H1 (cell line): ENCODE measurements at regions of chr1 and their contacts with region 1.

Region 1: DNA sequence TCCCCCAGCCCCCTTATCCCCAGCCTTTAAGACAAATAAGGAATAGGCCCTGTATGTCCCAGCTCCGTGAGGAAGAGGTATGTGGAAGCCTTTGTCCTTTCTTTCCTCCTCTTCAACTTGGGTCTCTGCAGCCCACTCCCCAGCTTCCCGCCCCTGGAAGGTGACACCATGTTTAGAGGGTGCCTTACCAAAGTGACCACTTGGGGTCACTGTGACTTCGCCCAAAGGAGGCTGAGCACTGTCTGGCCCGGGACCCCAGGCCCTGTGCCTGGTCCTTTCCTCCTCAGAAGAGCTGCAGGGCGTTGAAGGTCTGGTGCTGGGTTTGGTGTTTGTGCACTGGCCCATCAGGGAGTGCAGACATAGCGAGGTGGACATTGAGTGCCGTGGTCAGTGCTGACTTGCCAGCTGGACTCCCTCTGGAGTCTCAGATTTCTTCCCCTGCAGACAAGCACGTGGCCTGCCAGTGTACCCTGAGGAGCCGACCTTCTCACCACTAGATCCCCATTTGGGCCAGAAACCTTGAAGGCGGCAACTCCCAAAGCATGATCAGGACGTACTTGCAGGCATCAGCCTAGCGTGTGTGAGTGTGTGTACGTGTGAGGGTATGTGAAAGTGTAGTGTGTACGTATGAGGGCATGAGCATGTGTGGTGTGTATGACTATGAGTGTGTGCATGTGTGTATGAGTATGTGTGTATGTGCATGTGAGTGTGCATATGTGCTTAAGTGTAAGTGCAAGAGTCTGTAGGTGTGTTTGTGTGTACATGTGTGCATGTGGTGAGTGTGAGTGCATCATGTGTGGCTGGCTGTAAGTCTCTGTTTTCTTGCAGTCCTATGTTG is 181.4 kb upstream of the KIAA0040 start:
- DNase-seq: peak; percentile 21 to 85
- H3K4me3 ChIP-seq: no peak overlapping the region
- H3K27ac ChIP-seq: no peak overlapping the region
- H3K4me1 ChIP-seq: peaks cover 0 to 4% (median 0%) of the 10 kb centered on the region in 4 experiments; a peak in 3 of 7 replicates
- H3K27me3 ChIP-seq: no peaks in the 10 kb centered on the region; a peak in 1 of 7 replicates
- CTCF ChIP-seq: peak; percentile 86 to 91 (median 90)
- EP300 ChIP-seq: no peak
- POLR2A ChIP-seq: no peak
- RAD21 ChIP-seq: peak; percentile 97 to 99

Region 2: GRCh38 chr1:174775614-174776013 is 598.4 kb before region 1 on chr1:
- CTCF ChIA-PET with region 1: no interaction called
- POLR2A ChIA-PET with region 1: no interaction called
- DNase-seq: no peak
- H3K4me3 ChIP-seq: no peak overlapping the region
- H3K27ac ChIP-seq: no peak overlapping the region
- H3K4me1 ChIP-seq: no peaks in the 10 kb centered on the region
- H3K27me3 ChIP-seq: no peaks in the 10 kb centered on the region
- CTCF ChIP-seq: no peak
- EP300 ChIP-seq: no peak
- POLR2A ChIP-seq: no peak
- RAD21 ChIP-seq: no peak

Region 3: DNA sequence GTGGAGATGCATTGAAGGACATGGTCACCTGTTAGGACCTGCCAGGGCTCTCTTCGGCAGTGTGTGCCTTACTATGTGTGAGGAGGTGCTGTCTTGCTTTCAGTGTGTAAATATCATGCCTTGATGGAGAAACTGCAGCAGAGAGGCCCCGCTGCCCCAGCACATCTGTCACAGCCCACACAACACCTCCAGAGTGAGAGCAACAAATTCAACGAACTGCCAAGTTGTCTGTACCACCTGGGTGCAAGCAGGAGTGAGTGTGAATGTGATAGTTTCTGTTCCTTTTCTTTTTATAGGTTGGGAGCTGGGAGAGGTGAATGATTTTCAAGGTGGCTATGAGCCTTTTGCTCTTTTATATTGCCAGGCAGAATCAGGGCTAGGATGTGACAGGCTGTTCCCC is 66.8 kb before region 1 on chr1:
- CTCF ChIA-PET with region 1: no interaction called
- POLR2A ChIA-PET with region 1: no interaction called
- DNase-seq: no peak
- H3K4me3 ChIP-seq: no peak overlapping the region
- H3K27ac ChIP-seq: no peak overlapping the region
- H3K4me1 ChIP-seq: peaks cover 0 to 3% (median 0%) of the 10 kb centered on the region in 4 experiments; a peak in 1 of 7 replicates
- H3K27me3 ChIP-seq: no peaks in the 10 kb centered on the region
- CTCF ChIP-seq: no peak
- EP300 ChIP-seq: no peak
- POLR2A ChIP-seq: no peak
- RAD21 ChIP-seq: no peak

Region 4: GRCh38 chr1:175363031-175363430 is 11.0 kb before region 1 on chr1:
- CTCF ChIA-PET with region 1: interaction called, 21 read pairs
- POLR2A ChIA-PET with region 1: no interaction called
- DNase-seq: no peak
- H3K4me3 ChIP-seq: no peak overlapping the region
- H3K27ac ChIP-seq: no peak overlapping the region
- H3K4me1 ChIP-seq: no peaks in the 10 kb centered on the region
- H3K27me3 ChIP-seq: peaks cover 0 to 3% (median under 1%) of the 10 kb centered on the region in 4 experiments; a peak in 2 of 7 replicates
- CTCF ChIP-seq: no peak
- EP300 ChIP-seq: no peak
- POLR2A ChIP-seq: no peak
- RAD21 ChIP-seq: no peak

Region 5: DNA sequence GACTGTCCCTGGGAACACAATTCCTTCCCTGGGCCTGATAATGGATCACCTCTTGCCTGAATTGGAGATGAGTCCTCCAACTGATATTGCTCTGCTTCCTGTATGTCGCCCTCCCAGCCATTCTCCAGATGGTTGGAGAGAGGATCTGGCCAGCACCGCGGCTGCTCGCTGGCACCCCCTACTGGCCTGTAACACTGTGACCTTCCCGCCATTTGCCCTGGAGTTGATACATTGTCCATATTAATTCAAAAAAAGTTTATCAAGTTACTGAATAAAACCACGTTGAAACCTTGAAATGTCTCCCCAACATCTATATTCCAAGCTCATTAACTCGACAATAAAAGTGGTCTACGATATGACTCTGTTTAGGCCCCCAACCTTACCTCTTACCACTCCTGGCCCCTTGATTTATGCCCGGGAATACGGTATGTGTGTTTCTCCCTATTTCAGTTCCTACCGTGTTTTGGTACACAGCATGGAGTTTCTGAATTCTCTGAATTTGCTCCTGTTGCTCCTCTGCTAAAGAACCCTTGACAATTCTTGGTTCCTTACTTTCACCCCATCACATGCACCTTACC is 60.4 kb after region 1 on chr1:
- CTCF ChIA-PET with region 1: interaction called, 39 read pairs
- POLR2A ChIA-PET with region 1: no interaction called
- DNase-seq: peak; percentile 17 to 80
- H3K4me3 ChIP-seq: no peak overlapping the region
- H3K27ac ChIP-seq: no peak overlapping the region
- H3K4me1 ChIP-seq: no peaks in the 10 kb centered on the region
- H3K27me3 ChIP-seq: no peaks in the 10 kb centered on the region
- CTCF ChIP-seq: peak; percentile 75 to 88 (median 85)
- EP300 ChIP-seq: no peak
- POLR2A ChIP-seq: no peak
- RAD21 ChIP-seq: peak; percentile 62 to 69

Region 6: DNA sequence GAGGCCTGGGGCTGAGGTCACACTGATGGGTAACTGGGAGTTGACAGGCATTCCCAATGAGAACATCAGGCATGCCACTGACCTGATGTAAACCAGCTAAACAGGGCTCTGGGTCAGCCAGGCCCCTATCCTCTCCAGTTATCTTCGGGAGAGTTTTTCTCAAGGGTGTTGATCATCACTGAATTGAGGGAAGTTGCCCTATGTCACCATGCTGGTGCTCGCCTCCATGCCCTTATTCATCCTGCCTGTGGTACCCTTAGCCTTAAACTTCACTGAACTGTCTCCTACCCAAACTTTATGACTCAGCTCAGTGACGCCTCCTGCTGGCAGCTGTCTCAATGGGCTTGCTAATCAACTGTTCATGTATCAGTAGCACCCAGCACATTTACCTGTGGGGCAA is 450.1 kb after region 1 on chr1:
- CTCF ChIA-PET with region 1: interaction called, 11 read pairs
- POLR2A ChIA-PET with region 1: no interaction called
- DNase-seq: peak; percentile 50 to 90
- H3K4me3 ChIP-seq: no peak overlapping the region
- H3K27ac ChIP-seq: no peak overlapping the region
- H3K4me1 ChIP-seq: peaks cover 0 to 1% (median 0%) of the 10 kb centered on the region in 4 experiments; a peak in 1 of 7 replicates
- H3K27me3 ChIP-seq: no peaks in the 10 kb centered on the region
- CTCF ChIP-seq: peak; percentile 61 to 92 (median 83)
- EP300 ChIP-seq: no peak
- POLR2A ChIP-seq: no peak
- RAD21 ChIP-seq: peak; percentile 83 to 89